T-cell (primary cell): ENCODE measurements at regions of chr1 and their contacts with region 1.

Region 1: GRCh38 chr1:89632657-89633247 is at the start of gene LRRC8C:
- DNase-seq: peak; percentile 72 to 94 (median 86)
- ATAC-seq: peak; percentile 85 to 90 (median 86)
- H3K4me3 ChIP-seq: peak within 1 kb of the TSS; percentile 86 to 99
- H3K4me3 Mint-ChIP-seq: peak within 1 kb of the TSS; percentile 95 to 96 (median 96)
- H3K27ac ChIP-seq: peak within 1 kb of the TSS; percentile 92
- H3K27ac Mint-ChIP-seq: peak within 1 kb of the TSS; percentile 97 to 98
- H3K4me1 ChIP-seq: peaks cover 28 to 60% of the 10 kb centered on the region in 2 experiments
- H3K4me1 Mint-ChIP-seq: peaks cover 76 to 87% (median 79%) of the 10 kb centered on the region in 3 donors
- H3K27me3 ChIP-seq: no peaks in the 10 kb centered on the region
- H3K27me3 Mint-ChIP-seq: no peaks in the 10 kb centered on the region
- total RNA-seq, gene LRRC8C: 33.4 to 48.4 (median 41.9) TPM

Region 2: GRCh38 chr1:89608319-89608983 is 24.3 kb before region 1 on chr1:
- CTCF ChIA-PET with region 1: interaction called, 4 to 45 read pairs
- POLR2A ChIA-PET with region 1: interaction called, 6 to 10 read pairs
- DNase-seq: peak in 34 of 35 experiments; percentile 52 to 89 (median 75)
- ATAC-seq: peak; percentile 49 to 73 (median 58)
- H3K4me3 ChIP-seq: peak overlapping the region in 1 of 2 donors; percentile 41
- H3K4me3 Mint-ChIP-seq: peak overlapping the region; percentile 76 to 85 (median 84)
- H3K27ac ChIP-seq: peak overlapping the region; percentile 88
- H3K27ac Mint-ChIP-seq: peak overlapping the region; percentile 99 to 100
- H3K4me1 ChIP-seq: peaks cover 85% of the 10 kb centered on the region in 2 experiments
- H3K4me1 Mint-ChIP-seq: peaks cover 91 to 96% (median 96%) of the 10 kb centered on the region in 3 donors
- H3K27me3 ChIP-seq: no peaks in the 10 kb centered on the region
- H3K27me3 Mint-ChIP-seq: no peaks in the 10 kb centered on the region